A673 (cell line): ENCODE measurements at regions of chr18 and their contacts with region 1.

Region 1: GRCh38 chr18:36856815-36857214 is 27.9 kb downstream of the KIAA1328 start:
- DNase-seq: no peak
- H3K4me3 ChIP-seq: no peak overlapping the region
- H3K27ac ChIP-seq: no peak overlapping the region
- H3K4me1 ChIP-seq: peaks cover 7% of the 10 kb centered on the region
- H3K27me3 ChIP-seq: no peaks in the 10 kb centered on the region
- CTCF ChIP-seq: no peak

Region 2: DNA sequence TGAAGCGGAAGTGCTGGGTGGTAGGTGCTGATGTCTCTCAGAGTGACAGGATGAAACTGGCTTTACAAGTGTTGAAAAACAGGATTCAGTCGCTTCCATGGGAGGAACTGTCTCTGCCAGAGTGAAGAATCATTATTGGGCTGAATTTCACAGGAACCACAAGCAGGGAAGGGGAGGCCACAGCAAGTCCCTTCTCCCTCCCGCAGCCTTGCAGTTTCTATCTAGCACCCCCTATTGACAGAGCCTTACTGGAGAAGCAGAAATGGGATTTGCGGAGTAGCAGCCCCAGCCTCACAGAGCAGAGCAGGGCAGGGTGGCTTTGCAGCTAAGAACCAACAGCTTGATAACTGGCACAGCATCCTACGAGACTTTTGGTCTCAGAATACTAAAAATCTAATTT is 917.7 kb before region 1 on chr18:
- CTCF ChIA-PET with region 1: no interaction called
- POLR2A ChIA-PET with region 1: no interaction called
- intact Hi-C with region 1: no loop called
- DNase-seq: peak; percentile 18
- H3K4me3 ChIP-seq: no peak overlapping the region
- H3K27ac ChIP-seq: no peak overlapping the region
- H3K4me1 ChIP-seq: no peaks in the 10 kb centered on the region
- H3K27me3 ChIP-seq: no peaks in the 10 kb centered on the region
- CTCF ChIP-seq: peak; percentile 43; the same call in 1 of the 2 replicates

Region 3: DNA sequence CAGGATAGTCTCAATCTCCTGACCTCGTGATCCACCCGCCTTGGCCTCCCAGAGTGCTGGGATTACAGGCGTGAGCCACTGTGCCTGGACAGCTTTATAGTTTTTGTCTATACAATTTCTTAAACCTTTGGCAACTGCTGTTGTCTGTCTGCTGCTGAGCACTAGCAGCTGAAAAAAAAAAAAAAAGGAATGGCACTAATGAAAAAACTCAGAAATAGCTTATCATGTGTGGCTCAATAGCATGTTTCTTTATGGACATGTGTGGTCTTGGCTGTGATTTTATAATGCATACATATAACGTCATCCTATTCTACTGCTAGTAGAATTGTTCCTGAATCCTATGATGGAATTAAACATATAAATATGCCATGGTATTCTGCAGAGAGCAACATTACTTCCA is 259.2 kb before region 1 on chr18:
- CTCF ChIA-PET with region 1: no interaction called
- POLR2A ChIA-PET with region 1: interaction called, 11 read pairs
- intact Hi-C with region 1: no loop called
- DNase-seq: no peak
- H3K4me3 ChIP-seq: no peak overlapping the region
- H3K27ac ChIP-seq: no peak overlapping the region
- H3K4me1 ChIP-seq: no peaks in the 10 kb centered on the region
- H3K27me3 ChIP-seq: no peaks in the 10 kb centered on the region
- CTCF ChIP-seq: no peak

Region 4: DNA sequence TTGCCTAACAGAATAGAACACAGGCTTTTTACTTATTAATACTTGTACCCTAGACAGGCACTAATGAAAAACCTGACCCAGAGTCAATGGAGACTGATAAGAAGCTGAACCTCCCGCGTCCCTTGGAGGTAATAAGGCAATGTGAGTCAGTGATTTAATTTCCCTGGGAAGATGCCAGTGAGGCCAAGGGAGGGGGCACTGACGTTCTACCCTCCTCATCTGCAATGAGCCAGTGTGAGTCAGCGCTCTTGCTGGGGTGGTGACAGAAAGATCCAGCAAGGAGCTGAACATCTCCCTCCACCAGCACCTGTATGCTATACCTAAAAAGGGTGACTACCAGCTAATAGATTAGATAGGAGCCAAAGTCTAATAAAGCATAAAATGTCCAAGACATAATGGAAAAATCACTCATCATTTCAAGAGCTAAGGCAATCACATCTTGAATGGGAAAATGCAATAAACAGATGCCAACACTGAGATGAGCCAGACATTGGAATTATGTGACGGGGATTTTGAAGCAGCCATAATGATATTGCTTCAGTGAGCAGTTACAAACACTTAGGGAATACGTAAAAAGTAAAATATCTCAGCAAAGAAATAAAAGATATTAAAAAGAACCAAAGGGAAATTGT is 144.9 kb before region 1 on chr18:
- CTCF ChIA-PET with region 1: no interaction called
- POLR2A ChIA-PET with region 1: no interaction called
- intact Hi-C with region 1: no loop called
- DNase-seq: peak; percentile 37
- H3K4me3 ChIP-seq: no peak overlapping the region
- H3K27ac ChIP-seq: no peak overlapping the region
- H3K4me1 ChIP-seq: no peaks in the 10 kb centered on the region
- H3K27me3 ChIP-seq: no peaks in the 10 kb centered on the region
- CTCF ChIP-seq: no peak

Region 5: GRCh38 chr18:36752929-36753865 is 103.6 kb before region 1 on chr18:
- CTCF ChIA-PET with region 1: no interaction called
- POLR2A ChIA-PET with region 1: no interaction called
- intact Hi-C with region 1: no loop called
- DNase-seq: no peak
- H3K4me3 ChIP-seq: no peak overlapping the region
- H3K27ac ChIP-seq: no peak overlapping the region
- H3K4me1 ChIP-seq: no peaks in the 10 kb centered on the region
- H3K27me3 ChIP-seq: no peaks in the 10 kb centered on the region
- CTCF ChIP-seq: no peak

Region 6: GRCh38 chr18:37166491-37166890 is 309.7 kb after region 1 on chr18:
- CTCF ChIA-PET with region 1: no interaction called
- POLR2A ChIA-PET with region 1: no interaction called
- intact Hi-C with region 1: no loop called
- DNase-seq: no peak
- H3K4me3 ChIP-seq: no peak overlapping the region
- H3K27ac ChIP-seq: no peak overlapping the region
- H3K4me1 ChIP-seq: no peaks in the 10 kb centered on the region
- H3K27me3 ChIP-seq: no peaks in the 10 kb centered on the region
- CTCF ChIP-seq: no peak